ENCODE measurements at regions of chr14 and their contacts with region 1.

Region 1: DNA sequence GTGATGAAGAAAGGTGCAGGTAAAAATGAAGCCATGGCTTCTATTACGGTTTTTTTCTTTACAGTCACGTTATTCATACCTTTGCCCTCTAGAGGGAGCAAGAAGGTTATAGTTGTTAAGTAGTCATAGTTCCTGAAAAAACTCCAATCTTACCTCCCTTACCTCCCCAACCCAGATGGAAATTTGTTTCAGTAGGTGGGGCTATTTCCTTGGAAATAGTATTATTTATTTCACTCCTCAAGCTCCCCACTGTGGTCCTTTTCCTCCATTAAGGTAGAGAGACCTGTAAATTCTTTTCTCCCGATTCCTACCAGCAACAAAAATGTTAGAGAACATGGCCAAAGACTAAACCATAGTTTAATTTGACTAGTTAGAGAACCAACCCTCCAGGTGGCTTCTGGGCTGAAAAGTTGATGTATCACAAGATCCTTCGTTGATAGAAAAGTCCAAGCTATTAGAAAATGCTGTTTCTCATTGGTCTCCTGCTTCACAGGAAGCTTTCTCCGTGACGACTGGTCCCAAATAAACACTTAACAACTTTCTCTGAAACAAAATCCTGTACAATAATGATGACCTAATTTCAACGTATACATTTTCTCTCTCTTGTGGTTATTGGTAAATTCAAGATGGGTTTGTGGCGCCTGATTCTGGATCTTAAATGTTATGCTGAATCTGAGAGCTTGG is 43.5 kb downstream of the TMX1 start:
- DNase-seq: no peak
- ATAC-seq: peak; percentile 66 to 87 (median 85)
- H3K4me3 ChIP-seq: no peak overlapping the region
- H3K27ac ChIP-seq: no peak overlapping the region
- H3K4me1 ChIP-seq: peaks cover 0 to 4% (median 0%) of the 10 kb centered on the region in 12 donors
- H3K27me3 ChIP-seq: no peaks in the 10 kb centered on the region
- CTCF ChIP-seq: peak; percentile 58 to 91 (median 83)
- POLR2A ChIP-seq: no peak

Region 2: DNA sequence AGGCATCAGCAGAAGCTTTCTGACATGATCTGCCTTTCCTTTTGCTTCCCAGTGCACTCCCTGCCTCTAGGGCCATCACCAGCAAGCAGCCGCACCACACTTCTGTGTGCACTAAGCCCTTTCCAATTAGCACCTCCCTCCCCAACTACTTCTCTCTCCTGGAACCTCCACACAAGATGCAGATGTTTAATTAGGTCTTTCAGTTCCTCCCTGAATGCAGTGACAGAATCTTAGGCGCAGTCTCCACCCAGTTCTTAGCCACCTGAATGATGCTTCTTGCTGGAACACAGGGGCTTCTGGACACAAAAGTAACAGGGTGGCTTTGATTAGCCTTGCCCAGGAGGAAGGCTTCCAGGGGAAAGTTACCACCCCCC is 485.5 kb before region 1 on chr14:
- intact Hi-C with region 1: no loop called
- DNase-seq: no peak
- ATAC-seq: no peak
- H3K4me3 ChIP-seq: no peak overlapping the region
- H3K27ac ChIP-seq: no peak overlapping the region
- H3K4me1 ChIP-seq: peaks cover 0 to 34% (median 6%) of the 10 kb centered on the region in 12 donors
- H3K27me3 ChIP-seq: no peaks in the 10 kb centered on the region
- CTCF ChIP-seq: no peak
- POLR2A ChIP-seq: no peak

Region 3: GRCh38 chr14:51638071-51638944 is 354.8 kb after region 1 on chr14:
- intact Hi-C with region 1: loop called in 1 of 10 experiments (anchors 10 kb)
- DNase-seq: no peak
- ATAC-seq: peak; percentile 55 to 65 (median 64)
- H3K4me3 ChIP-seq: no peak overlapping the region
- H3K27ac ChIP-seq: no peak overlapping the region
- H3K4me1 ChIP-seq: peaks cover 0 to 14% (median 0%) of the 10 kb centered on the region in 12 donors
- H3K27me3 ChIP-seq: no peaks in the 10 kb centered on the region
- CTCF ChIP-seq: no peak
- POLR2A ChIP-seq: no peak

Region 4: GRCh38 chr14:51780006-51780692 is 496.6 kb after region 1 on chr14:
- intact Hi-C with region 1: loop called (anchors 1 to 2 kb)
- DNase-seq: peak; percentile 54 to 73 (median 68)
- ATAC-seq: peak; percentile 23 to 74 (median 72)
- H3K4me3 ChIP-seq: no peak overlapping the region
- H3K27ac ChIP-seq: no peak overlapping the region
- H3K4me1 ChIP-seq: peaks cover 0 to 22% (median 5%) of the 10 kb centered on the region in 12 donors
- H3K27me3 ChIP-seq: peaks cover 0 to 5% (median 0%) of the 10 kb centered on the region in 9 donors
- CTCF ChIP-seq: peak; percentile 73 to 91 (median 84)
- POLR2A ChIP-seq: no peak

Region 5: DNA sequence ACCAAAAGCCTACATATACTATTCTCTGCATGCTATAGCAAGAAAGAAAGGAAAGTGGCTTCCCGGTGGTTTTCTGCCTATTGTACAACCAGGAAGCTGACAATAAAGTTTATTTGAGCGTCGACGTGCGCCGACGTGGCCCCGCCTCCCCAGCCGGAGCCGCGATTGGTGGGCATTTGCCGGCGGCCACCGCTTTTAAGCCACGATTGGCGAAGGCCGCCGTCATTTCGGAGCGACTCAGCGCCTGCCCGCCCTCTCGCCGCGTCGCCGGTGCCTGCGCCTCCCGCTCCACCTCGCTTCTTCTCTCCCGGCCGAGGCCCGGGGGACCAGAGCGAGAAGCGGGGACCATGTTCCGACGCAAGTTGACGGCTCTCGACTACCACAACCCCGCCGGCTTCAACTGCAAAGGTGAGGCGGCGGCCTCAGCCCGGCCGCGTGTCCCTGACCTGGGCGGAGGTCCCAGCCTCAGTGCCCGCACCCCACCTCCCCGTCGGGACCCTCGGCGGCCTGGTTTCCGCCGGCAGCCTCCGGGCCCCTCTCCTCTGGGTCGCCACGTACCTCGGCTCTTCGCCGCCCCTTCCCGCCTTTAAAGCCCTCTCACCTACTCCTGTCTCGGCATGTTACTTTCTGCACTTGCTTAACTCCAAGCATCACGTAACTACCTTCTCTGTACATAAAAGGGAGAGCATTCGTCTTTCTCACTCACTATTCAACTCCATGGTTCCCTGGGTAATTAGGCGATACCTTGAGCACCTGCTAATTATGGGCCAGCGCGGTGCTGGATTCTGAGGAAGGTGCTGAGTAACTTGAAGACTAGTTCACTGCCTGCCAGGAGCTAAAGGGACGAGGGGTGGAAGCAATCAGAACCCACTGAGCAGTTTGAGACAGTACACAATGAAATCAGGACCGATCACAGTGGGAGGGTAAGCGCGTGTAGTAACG is 706.0 kb after region 1 on chr14 and contains the start of gene RTRAF:
- intact Hi-C with region 1: loop called in 3 of 10 experiments (anchors 10 kb)
- DNase-seq: peak; percentile 96 to 97 (median 96)
- ATAC-seq: peak; percentile 97 to 100 (median 99)
- H3K4me3 ChIP-seq: peak within 1 kb of the TSS; percentile 58 to 98 (median 88)
- H3K27ac ChIP-seq: peak within 1 kb of the TSS; percentile 60 to 93 (median 86)
- H3K4me1 ChIP-seq: peaks cover 0 to 51% (median 27%) of the 10 kb centered on the region in 12 donors
- H3K27me3 ChIP-seq: no peaks in the 10 kb centered on the region
- CTCF ChIP-seq: peak in 1 of 12 donors; percentile 16
- POLR2A ChIP-seq: peak; percentile 49 to 90
- total RNA-seq, gene RTRAF: 72.9 to 260 (median 193) TPM

Region 6: DNA sequence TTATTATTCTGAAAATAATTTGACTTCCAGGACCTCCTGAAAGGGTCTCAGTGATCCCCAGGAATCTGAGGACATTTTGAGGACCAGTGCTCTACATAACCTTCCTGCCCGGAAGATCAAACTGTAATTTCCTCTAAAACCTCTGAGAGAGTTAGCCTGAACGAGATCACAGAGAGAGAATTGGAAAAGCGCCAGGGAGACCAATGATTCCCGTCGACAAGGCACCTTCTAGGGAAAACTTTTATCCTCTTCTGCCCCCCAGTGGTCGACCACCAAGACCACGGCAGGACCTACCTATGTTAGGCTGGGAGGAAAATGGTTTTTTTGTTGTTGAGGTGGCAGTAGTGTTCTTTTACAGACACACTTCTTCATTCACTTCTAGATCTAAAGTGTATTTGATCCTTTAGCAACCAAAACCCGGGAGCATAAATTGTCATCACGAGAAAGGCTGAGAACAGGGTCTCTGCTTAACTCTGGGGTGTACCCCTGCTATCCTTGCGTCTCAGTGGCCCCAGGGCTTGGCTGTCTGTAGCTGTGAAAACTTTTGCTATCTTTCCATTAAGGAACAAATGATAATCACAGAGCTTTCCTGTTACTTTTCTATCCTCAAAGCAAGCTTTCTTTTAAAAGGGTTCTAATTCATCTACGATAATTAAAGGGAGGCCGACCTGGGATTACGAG is 848.2 kb after region 1 on chr14:
- intact Hi-C with region 1: loop called in 4 of 10 experiments (anchors 10 kb)
- DNase-seq: peak; percentile 63 to 93 (median 83)
- ATAC-seq: peak; percentile 83 to 95 (median 93)
- H3K4me3 ChIP-seq: peak overlapping the region in 2 of 12 donors; percentile 5 to 13
- H3K27ac ChIP-seq: peak overlapping the region in 3 of 12 donors; percentile 23 to 48 (median 47)
- H3K4me1 ChIP-seq: peaks cover 0 to 13% (median 8%) of the 10 kb centered on the region in 12 donors
- H3K27me3 ChIP-seq: no peaks in the 10 kb centered on the region
- CTCF ChIP-seq: peak; percentile 58 to 87 (median 83)
- POLR2A ChIP-seq: no peak